OCI-LY7 (cell line): ENCODE measurements at regions of chr2 and their contacts with region 1.

Region 1: GRCh38 chr2:39059366-39059952 is 61.4 kb downstream of the SOS1 start:
- DNase-seq: peak; percentile 77
- H3K4me3 ChIP-seq: no peak overlapping the region
- H3K27ac ChIP-seq: no peak overlapping the region
- H3K4me1 ChIP-seq: no peaks in the 10 kb centered on the region
- CTCF ChIP-seq: peak; percentile 100

Region 2: DNA sequence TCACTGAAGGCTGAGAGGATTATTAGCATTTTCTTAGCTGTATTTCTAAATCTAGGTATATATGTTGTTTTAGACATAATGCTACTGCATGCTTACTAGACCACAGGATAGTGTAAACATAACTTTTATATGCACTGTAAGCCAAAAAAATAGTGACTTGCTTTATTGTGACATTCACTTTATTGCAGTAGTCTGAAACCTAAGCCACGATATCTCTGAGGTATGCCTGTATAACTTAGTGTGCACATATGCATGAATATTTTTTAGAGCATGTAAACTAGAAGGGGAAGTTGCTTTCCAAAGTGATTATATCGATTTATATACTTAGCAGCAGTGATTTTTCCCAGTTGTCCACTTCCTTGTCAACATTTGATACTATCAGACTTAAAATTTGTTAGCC is 20.4 kb before region 1 on chr2:
- CTCF ChIA-PET with region 1: no interaction called
- POLR2A ChIA-PET with region 1: no interaction called
- intact Hi-C with region 1: no loop called
- DNase-seq: no peak
- H3K4me3 ChIP-seq: no peak overlapping the region
- H3K27ac ChIP-seq: no peak overlapping the region
- H3K4me1 ChIP-seq: no peaks in the 10 kb centered on the region
- CTCF ChIP-seq: no peak

Region 3: DNA sequence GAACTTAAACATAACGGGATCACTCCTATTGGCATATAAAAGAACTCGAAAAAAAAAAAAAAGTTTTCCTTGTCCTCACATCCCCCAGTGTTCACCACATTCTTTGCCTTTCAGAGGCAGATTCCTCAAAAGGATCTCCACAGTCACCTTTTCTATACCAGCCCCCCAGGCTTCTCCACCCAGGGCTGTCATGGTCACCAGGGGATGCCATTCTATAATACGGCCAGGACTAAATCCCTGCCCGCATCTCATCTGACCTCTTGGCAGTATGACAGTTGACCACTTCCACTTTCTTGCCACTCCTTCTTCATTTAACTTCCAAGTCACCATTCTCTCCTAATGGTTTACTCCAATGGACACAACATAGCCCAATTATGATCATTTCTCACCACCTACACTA is 32.1 kb after region 1 on chr2:
- CTCF ChIA-PET with region 1: no interaction called
- POLR2A ChIA-PET with region 1: no interaction called
- intact Hi-C with region 1: no loop called
- DNase-seq: no peak
- H3K4me3 ChIP-seq: no peak overlapping the region
- H3K27ac ChIP-seq: no peak overlapping the region
- H3K4me1 ChIP-seq: peaks cover 10% of the 10 kb centered on the region
- CTCF ChIP-seq: no peak

Region 4: DNA sequence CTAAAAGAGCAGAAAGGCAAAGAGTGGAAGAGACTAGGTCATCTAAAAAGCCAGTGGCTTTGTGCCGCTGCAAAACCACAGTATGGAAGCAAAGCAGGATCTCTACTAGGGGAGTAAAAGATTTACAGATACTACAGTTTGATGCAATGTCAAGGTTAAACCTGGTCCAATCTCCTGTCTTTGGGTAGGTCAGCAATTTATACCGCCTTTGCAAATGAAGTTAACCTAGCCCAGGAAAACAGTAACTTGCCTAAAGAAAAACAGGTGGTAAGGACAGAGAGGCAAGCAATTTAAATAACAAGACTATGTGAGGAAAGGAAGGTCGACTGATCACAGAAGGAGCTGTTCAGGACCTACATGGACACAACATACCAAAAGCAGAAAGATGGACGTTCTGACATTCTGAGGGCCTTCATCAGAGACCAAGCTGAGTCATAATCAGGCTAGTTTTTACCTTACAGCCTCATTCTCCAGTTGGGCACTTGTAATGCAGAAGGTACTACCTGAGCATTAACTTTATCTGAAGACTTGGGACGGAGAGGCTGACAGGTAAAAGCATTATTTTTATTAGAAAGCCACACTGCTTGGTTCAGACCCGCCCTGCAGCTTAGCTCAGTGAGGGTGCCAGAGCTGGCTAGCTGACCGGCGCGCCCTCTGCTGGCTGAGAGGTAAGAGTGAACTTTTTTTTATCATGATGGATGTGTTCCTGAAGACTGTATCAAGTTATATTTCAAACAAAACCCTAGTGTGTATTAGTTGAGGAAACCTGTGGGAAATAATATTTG is 168.4 kb after region 1 on chr2:
- CTCF ChIA-PET with region 1: interaction called, 3 read pairs
- POLR2A ChIA-PET with region 1: interaction called, 3 read pairs
- intact Hi-C with region 1: loop called (anchors 1 kb)
- DNase-seq: peak; percentile 69
- H3K4me3 ChIP-seq: peak overlapping the region; percentile 33
- H3K27ac ChIP-seq: no peak overlapping the region
- H3K4me1 ChIP-seq: peaks cover 7% of the 10 kb centered on the region
- CTCF ChIP-seq: peak; percentile 84

Region 5: DNA sequence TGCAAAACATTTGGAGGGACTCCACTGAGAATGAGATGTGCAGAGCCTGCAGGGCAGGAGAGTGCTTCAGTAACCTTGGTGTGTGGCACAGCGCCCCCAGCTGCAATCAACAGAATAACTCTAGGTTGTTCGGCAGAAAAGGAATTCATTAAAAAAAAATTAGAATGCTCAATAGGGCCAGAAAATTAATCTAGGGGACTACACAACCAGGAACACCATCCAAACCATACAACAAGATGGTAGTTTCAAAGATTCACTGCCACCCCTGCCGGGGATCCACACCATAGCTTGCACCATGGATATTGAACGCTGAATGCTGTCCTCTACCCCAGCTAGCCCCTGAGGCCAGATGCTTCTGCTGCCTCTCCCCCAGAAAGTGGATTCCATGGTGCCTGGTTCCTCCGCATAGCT is 669.5 kb after region 1 on chr2:
- CTCF ChIA-PET with region 1: no interaction called
- POLR2A ChIA-PET with region 1: no interaction called
- intact Hi-C with region 1: loop called (anchors 10 kb)
- DNase-seq: peak; percentile 59
- H3K4me3 ChIP-seq: no peak overlapping the region
- H3K27ac ChIP-seq: no peak overlapping the region
- H3K4me1 ChIP-seq: no peaks in the 10 kb centered on the region
- CTCF ChIP-seq: peak; percentile 91